CD8-positive, alpha-beta T cell (primary cell): ENCODE measurements at regions of chr1 and their contacts with region 1.

Region 1: GRCh38 chr1:225447650-225448089 is 19.8 kb upstream of the LBR start:
- DNase-seq: peak in 1 of 9 experiments; percentile 25
- ATAC-seq: no peak
- H3K4me3 ChIP-seq: no peak overlapping the region
- H3K4me3 Mint-ChIP-seq: no peak overlapping the region
- H3K27ac ChIP-seq: no peak overlapping the region
- H3K27ac Mint-ChIP-seq: peak overlapping the region; percentile 14
- H3K4me1 ChIP-seq: peaks cover 35% of the 10 kb centered on the region
- H3K4me1 Mint-ChIP-seq: peaks cover 51% of the 10 kb centered on the region
- H3K27me3 ChIP-seq: no peaks in the 10 kb centered on the region
- H3K27me3 Mint-ChIP-seq: no peaks in the 10 kb centered on the region
- CTCF ChIP-seq: no peak

Region 2: DNA sequence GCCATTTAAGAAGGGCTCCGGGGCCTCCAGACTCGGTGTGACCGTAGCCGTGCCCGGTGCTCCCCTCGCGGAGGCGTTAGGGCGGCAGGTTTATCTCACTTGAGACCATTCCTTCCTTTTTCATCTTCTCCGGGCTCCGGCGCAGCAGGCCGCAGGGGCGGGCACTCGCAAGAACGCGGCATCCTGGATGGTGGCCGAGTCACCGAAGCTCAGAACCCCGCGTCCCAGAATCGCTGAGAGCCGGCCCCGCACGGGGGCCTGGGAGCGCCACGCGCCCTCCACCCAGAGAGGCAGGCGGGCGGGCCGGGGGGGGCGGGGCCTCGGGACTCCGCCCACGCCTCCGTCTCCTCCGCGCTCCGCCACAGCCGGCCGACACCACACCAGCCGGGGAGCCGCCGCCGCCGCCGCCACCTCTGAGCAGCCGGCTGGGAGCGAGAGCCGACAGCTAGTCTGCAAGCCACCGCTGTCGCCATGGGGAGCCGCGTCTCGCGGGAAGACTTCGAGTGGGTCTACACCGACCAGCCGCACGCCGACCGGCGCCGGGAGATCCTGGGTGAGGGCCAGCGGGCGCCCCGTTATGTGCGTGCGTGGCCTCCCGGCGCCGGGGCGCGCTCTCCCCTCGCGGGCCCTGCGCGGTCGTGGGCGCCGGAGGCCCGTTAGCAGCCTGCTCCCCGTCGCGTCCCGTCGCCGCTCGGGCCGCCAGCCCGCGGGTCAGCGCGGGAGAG is 1264.6 kb before region 1 on chr1 and contains the start of gene DEGS1:
- CTCF ChIA-PET with region 1: no interaction called
- POLR2A ChIA-PET with region 1: no interaction called
- intact Hi-C with region 1: no loop called
- DNase-seq: peak; percentile 71 to 92 (median 84)
- ATAC-seq: peak; percentile 77
- H3K4me3 ChIP-seq: peak within 1 kb of the TSS; percentile 70 to 90
- H3K4me3 Mint-ChIP-seq: peak within 1 kb of the TSS; percentile 90
- H3K27ac ChIP-seq: peak within 1 kb of the TSS; percentile 88 to 94
- H3K27ac Mint-ChIP-seq: peak within 1 kb of the TSS; percentile 95
- H3K4me1 ChIP-seq: peaks cover 33% of the 10 kb centered on the region
- H3K4me1 Mint-ChIP-seq: peaks cover 48% of the 10 kb centered on the region
- H3K27me3 ChIP-seq: no peaks in the 10 kb centered on the region
- H3K27me3 Mint-ChIP-seq: no peaks in the 10 kb centered on the region
- CTCF ChIP-seq: no peak
- total RNA-seq, gene DEGS1: 52.1 to 54.7 TPM

Region 3: DNA sequence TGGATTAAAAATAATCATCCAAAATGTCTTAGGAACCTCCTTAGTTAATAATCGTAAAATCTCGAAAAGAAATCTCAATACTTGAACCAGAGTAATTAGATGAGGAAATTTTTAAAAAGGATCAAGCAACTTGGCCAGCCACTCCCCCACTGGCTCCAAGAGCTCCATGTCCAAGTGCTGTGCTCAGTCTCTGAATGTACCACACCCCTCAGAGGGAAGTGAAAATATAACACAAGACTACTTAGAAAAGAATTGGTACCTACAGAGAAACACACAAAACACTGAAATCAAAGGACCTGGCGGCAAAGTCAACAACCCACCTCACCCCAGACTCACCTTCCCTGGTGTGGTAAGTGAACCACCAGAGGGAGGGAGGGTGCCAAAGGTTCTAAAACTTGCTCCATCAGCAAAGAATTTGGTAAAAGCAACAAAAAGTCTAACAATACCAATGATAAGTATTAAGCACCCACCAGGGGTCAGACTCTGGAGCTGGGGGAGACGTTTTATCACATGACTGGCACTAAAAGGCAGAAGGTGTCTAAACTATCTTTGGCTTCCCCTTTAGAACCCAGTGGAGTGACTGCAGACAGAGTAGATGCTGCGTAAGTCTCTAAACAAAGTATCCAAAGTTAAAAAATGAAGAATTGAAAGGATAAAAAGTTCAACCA is 33.8 kb before region 1 on chr1:
- CTCF ChIA-PET with region 1: no interaction called
- POLR2A ChIA-PET with region 1: interaction called, 11 read pairs
- intact Hi-C with region 1: no loop called
- DNase-seq: peak in 2 of 9 experiments; percentile 23 to 38
- ATAC-seq: no peak
- H3K4me3 ChIP-seq: no peak overlapping the region
- H3K4me3 Mint-ChIP-seq: no peak overlapping the region
- H3K27ac ChIP-seq: no peak overlapping the region
- H3K27ac Mint-ChIP-seq: no peak overlapping the region
- H3K4me1 ChIP-seq: no peaks in the 10 kb centered on the region
- H3K4me1 Mint-ChIP-seq: peaks cover 24% of the 10 kb centered on the region
- H3K27me3 ChIP-seq: no peaks in the 10 kb centered on the region
- H3K27me3 Mint-ChIP-seq: no peaks in the 10 kb centered on the region
- CTCF ChIP-seq: no peak

Region 4: DNA sequence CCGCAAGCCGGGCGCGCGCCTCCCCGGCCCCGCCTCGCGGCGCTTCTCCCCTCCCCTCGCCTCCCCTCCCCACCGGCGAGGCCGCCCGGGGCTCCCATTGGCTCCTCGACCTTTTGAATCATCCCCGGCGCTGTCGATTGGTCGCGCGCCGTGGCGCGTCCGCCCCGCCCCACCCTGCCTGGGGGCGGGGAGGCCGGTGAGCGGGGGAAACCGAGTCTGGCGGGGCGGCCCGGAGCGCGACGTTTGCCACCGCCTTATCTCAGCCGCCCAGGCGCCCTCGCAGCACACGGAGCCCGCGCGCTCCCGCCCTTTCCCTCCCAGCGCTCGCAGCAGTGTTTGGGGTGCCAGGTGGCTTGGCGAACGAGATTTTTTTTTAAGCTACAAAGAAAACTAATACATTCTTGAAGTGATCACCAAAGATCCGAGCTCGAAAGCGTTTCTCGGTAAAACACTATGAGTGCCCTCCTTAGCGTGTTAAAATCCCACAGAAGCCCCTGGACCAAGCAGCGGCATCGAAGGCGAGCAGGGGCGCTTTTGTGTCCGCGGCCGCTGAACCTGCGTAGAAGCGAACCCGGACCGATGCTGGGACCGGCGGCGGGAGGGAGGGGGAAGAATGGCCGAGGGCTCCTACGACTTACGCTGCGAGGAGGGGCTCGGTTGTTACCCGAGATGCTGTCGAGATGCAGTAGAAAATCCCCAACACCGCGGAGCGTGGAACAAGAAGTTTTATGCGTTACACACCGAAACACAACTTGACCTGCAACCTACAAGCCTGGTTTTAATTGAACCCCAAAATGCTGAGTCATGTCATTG is 19.4 kb before region 1 on chr1:
- CTCF ChIA-PET with region 1: interaction called, 20 read pairs
- POLR2A ChIA-PET with region 1: interaction called, 111 read pairs
- intact Hi-C with region 1: loop called (anchors 1 kb)
- DNase-seq: peak; percentile 80 to 96 (median 91)
- ATAC-seq: peak; percentile 92
- H3K4me3 ChIP-seq: peak overlapping the region; percentile 80 to 89
- H3K4me3 Mint-ChIP-seq: peak overlapping the region; percentile 93
- H3K27ac ChIP-seq: peak overlapping the region; percentile 69 to 70
- H3K27ac Mint-ChIP-seq: peak overlapping the region; percentile 91
- H3K4me1 ChIP-seq: peaks cover 39% of the 10 kb centered on the region
- H3K4me1 Mint-ChIP-seq: peaks cover 44% of the 10 kb centered on the region
- H3K27me3 ChIP-seq: no peaks in the 10 kb centered on the region
- H3K27me3 Mint-ChIP-seq: no peaks in the 10 kb centered on the region
- CTCF ChIP-seq: no peak

Region 5: GRCh38 chr1:225460737-225461562 is 13.3 kb after region 1 on chr1:
- CTCF ChIA-PET with region 1: interaction called, 20 read pairs
- POLR2A ChIA-PET with region 1: interaction called, 19 read pairs
- intact Hi-C with region 1: no loop called
- DNase-seq: peak; percentile 26 to 91 (median 64)
- ATAC-seq: peak; percentile 94
- H3K4me3 ChIP-seq: peak overlapping the region in 1 of 2 experiments; percentile 28
- H3K4me3 Mint-ChIP-seq: no peak overlapping the region
- H3K27ac ChIP-seq: peak overlapping the region; percentile 16 to 70
- H3K27ac Mint-ChIP-seq: peak overlapping the region; percentile 80
- H3K4me1 ChIP-seq: peaks cover 31% of the 10 kb centered on the region
- H3K4me1 Mint-ChIP-seq: peaks cover 39% of the 10 kb centered on the region
- H3K27me3 ChIP-seq: no peaks in the 10 kb centered on the region
- H3K27me3 Mint-ChIP-seq: no peaks in the 10 kb centered on the region
- CTCF ChIP-seq: no peak

Region 6: GRCh38 chr1:225467193-225468020 is 19.7 kb after region 1 on chr1:
- CTCF ChIA-PET with region 1: interaction called, 3 read pairs
- POLR2A ChIA-PET with region 1: interaction called, 70 read pairs
- intact Hi-C with region 1: loop called (anchors 1 kb)
- DNase-seq: peak; percentile 67 to 93 (median 86)
- ATAC-seq: peak; percentile 81
- H3K4me3 ChIP-seq: peak overlapping the region; percentile 60 to 86
- H3K4me3 Mint-ChIP-seq: peak overlapping the region; percentile 92
- H3K27ac ChIP-seq: peak overlapping the region; percentile 88 to 95
- H3K27ac Mint-ChIP-seq: peak overlapping the region; percentile 98
- H3K4me1 ChIP-seq: peaks cover 35% of the 10 kb centered on the region
- H3K4me1 Mint-ChIP-seq: peaks cover 43% of the 10 kb centered on the region
- H3K27me3 ChIP-seq: no peaks in the 10 kb centered on the region
- H3K27me3 Mint-ChIP-seq: no peaks in the 10 kb centered on the region
- CTCF ChIP-seq: no peak

Region 7: DNA sequence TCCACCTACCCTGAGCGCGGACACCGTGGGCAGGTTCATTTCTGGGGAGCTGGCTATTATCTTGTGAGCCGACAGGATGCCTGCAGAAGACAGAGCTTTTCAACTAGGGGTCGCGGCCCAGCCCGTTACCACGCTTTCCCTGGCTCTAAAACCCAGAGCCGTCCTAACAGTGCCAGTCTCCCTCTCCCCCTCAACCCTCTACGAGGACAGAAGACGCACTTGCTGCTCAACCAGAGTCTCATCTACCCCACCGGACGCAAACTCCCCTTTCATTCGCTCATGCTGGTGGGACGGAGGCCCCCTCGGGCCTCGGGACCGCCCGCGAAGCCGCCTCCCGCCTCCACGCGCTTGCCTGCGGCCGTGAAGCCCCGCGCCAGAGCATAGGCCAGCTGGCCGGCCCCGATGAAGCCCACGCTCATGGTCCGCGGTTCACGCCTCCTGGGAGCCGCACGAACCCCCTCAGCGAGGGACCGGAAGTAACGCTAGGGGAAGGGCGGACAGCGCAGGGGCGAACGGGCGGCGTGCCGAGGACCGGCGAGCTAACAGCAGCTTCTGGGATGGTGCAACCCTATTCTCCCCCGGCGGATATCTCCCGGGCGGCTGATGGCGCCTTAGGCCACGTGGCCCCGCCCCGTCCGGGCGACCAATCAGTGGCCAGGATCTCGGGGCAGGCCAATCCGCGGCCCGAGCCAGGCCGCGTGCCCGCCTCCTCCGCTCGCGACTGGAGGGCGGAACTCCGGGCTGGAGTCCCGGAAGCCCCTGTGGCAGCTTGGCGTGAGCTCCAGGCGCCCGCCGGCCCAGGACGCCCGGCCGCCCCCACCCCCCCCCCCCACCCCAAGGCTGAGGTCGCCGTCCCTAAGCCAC is 476.3 kb after region 1 on chr1 and contains the start of gene PYCR2:
- CTCF ChIA-PET with region 1: no interaction called
- POLR2A ChIA-PET with region 1: interaction called, 3 read pairs
- intact Hi-C with region 1: loop called in 1 of 2 experiments (anchors 1 kb)
- DNase-seq: peak; percentile 90 to 98 (median 92)
- ATAC-seq: peak; percentile 98
- H3K4me3 ChIP-seq: peak within 1 kb of the TSS; percentile 75 to 79
- H3K4me3 Mint-ChIP-seq: peak within 1 kb of the TSS; percentile 94
- H3K27ac ChIP-seq: peak within 1 kb of the TSS; percentile 75 to 91
- H3K27ac Mint-ChIP-seq: peak within 1 kb of the TSS; percentile 93
- H3K4me1 ChIP-seq: peaks cover 75% of the 10 kb centered on the region
- H3K4me1 Mint-ChIP-seq: peaks cover 63% of the 10 kb centered on the region
- H3K27me3 ChIP-seq: no peaks in the 10 kb centered on the region
- H3K27me3 Mint-ChIP-seq: no peaks in the 10 kb centered on the region
- CTCF ChIP-seq: no peak
- total RNA-seq, gene PYCR2: 27.3 to 30.6 TPM

Region 8: GRCh38 chr1:226697151-226697939 is 1249.7 kb after region 1 on chr1:
- CTCF ChIA-PET with region 1: no interaction called
- POLR2A ChIA-PET with region 1: no interaction called
- intact Hi-C with region 1: no loop called
- DNase-seq: peak in 4 of 9 experiments; percentile 44 to 80 (median 52)
- ATAC-seq: peak; percentile 76
- H3K4me3 ChIP-seq: no peak overlapping the region
- H3K4me3 Mint-ChIP-seq: peak overlapping the region; percentile 59
- H3K27ac ChIP-seq: peak overlapping the region; percentile 29 to 57
- H3K27ac Mint-ChIP-seq: peak overlapping the region; percentile 98
- H3K4me1 ChIP-seq: peaks cover 97% of the 10 kb centered on the region
- H3K4me1 Mint-ChIP-seq: peaks cover 92% of the 10 kb centered on the region
- H3K27me3 ChIP-seq: no peaks in the 10 kb centered on the region
- H3K27me3 Mint-ChIP-seq: no peaks in the 10 kb centered on the region
- CTCF ChIP-seq: no peak